B cell (primary cell): ENCODE measurements at regions of chr3 and their contacts with region 1.

Region 1: GRCh38 chr3:146200461-146201220 is 39.7 kb upstream of the PLOD2 start:
- DNase-seq: no peak
- ATAC-seq: no peak
- H3K4me3 ChIP-seq: no peak overlapping the region
- H3K4me3 Mint-ChIP-seq: no peak overlapping the region
- H3K27ac ChIP-seq: no peak overlapping the region
- H3K27ac Mint-ChIP-seq: no peak overlapping the region
- H3K4me1 ChIP-seq: no peaks in the 10 kb centered on the region
- H3K4me1 Mint-ChIP-seq: no peaks in the 10 kb centered on the region
- H3K27me3 ChIP-seq: no peaks in the 10 kb centered on the region
- H3K27me3 Mint-ChIP-seq: no peaks in the 10 kb centered on the region
- CTCF ChIP-seq: no peak

Region 2: GRCh38 chr3:146189519-146190173 is 11.0 kb before region 1 on chr3:
- CTCF ChIA-PET with region 1: interaction called, 17 read pairs
- POLR2A ChIA-PET with region 1: no interaction called
- intact Hi-C with region 1: no loop called
- DNase-seq: peak; percentile 46
- ATAC-seq: peak; percentile 47
- H3K4me3 ChIP-seq: no peak overlapping the region
- H3K4me3 Mint-ChIP-seq: no peak overlapping the region
- H3K27ac ChIP-seq: no peak overlapping the region
- H3K27ac Mint-ChIP-seq: no peak overlapping the region
- H3K4me1 ChIP-seq: no peaks in the 10 kb centered on the region
- H3K4me1 Mint-ChIP-seq: no peaks in the 10 kb centered on the region
- H3K27me3 ChIP-seq: peaks cover 0 to 4% (median 0%) of the 10 kb centered on the region in 4 experiments
- H3K27me3 Mint-ChIP-seq: peaks cover 4% of the 10 kb centered on the region
- CTCF ChIP-seq: peak; percentile 84

Region 3: GRCh38 chr3:146308682-146309081 is 108.0 kb after region 1 on chr3:
- CTCF ChIA-PET with region 1: no interaction called
- POLR2A ChIA-PET with region 1: no interaction called
- intact Hi-C with region 1: no loop called
- DNase-seq: no peak
- ATAC-seq: no peak
- H3K4me3 ChIP-seq: no peak overlapping the region
- H3K4me3 Mint-ChIP-seq: no peak overlapping the region
- H3K27ac ChIP-seq: no peak overlapping the region
- H3K27ac Mint-ChIP-seq: no peak overlapping the region
- H3K4me1 ChIP-seq: no peaks in the 10 kb centered on the region
- H3K4me1 Mint-ChIP-seq: no peaks in the 10 kb centered on the region
- H3K27me3 ChIP-seq: no peaks in the 10 kb centered on the region
- H3K27me3 Mint-ChIP-seq: no peaks in the 10 kb centered on the region
- CTCF ChIP-seq: no peak